Mammary epithelial cell (primary cell): ENCODE measurements at regions of chr15 and their contacts with region 1.

Region 1: GRCh38 chr15:101294731-101295606 is at the start of gene SNRPA1:
- DNase-seq: peak; percentile 95
- H3K4me3 ChIP-seq: peak within 1 kb of the TSS; percentile 81 to 97 (median 94)
- H3K27ac ChIP-seq: peak within 1 kb of the TSS; percentile 90
- H3K4me1 ChIP-seq: peaks cover 30% of the 10 kb centered on the region
- H3K27me3 ChIP-seq: no peaks in the 10 kb centered on the region
- CTCF ChIP-seq: no peak
- total RNA-seq, gene SNRPA1: 17.2 to 85.7 TPM

Region 2: DNA sequence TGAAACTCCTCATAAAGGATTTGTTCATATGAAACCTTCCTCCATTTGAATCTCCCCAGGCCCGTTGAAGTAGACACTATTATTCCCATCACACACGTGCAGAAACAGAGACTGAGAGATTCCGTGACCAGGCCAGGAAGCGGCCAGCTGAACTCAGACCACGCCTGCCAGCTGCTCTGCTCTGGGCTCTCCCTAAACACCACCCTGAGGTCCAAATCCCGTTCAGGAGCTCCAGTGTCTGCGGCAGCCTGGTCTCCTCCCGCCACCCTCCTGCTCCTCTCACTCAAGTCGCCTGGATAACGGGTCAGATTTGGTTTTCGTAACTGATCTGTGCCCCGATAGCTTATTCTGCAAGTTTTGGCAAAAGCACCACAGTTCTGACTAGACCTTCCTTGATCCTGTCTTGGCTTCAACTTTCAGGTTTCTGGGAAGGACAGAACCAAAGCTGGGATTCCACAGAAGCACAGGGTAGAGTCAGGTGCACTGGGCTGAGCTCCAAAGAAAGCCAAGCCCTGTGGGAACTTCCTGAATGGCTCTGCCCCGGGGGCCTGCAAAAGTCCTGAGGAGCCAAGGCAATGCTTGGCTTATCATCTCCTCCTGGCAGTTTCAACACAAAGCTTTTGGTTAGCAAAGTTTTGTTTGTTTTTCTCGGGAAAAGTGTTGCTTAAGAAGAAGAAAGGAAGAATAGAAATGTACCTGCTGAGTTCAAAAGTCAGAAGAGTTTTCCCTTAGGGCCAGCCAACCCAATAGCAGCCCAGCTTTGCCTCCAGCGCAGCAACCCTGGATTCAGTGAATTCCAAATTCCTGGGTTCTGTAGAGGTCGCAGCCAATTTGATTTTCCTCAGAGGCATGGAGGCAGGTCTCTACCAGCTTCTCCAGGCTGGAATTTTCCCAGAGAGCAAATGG is 53.9 kb after region 1 on chr15:
- CTCF ChIA-PET with region 1: no interaction called
- dilution Hi-C with region 1: loop called (anchors 5 kb)
- in situ Hi-C with region 1: no loop called
- intact Hi-C with region 1: no loop called
- DNase-seq: peak; percentile 80
- H3K4me3 ChIP-seq: no peak overlapping the region
- H3K27ac ChIP-seq: no peak overlapping the region
- H3K4me1 ChIP-seq: peaks cover 15% of the 10 kb centered on the region
- H3K27me3 ChIP-seq: peaks cover 2% of the 10 kb centered on the region
- CTCF ChIP-seq: no peak

Region 3: DNA sequence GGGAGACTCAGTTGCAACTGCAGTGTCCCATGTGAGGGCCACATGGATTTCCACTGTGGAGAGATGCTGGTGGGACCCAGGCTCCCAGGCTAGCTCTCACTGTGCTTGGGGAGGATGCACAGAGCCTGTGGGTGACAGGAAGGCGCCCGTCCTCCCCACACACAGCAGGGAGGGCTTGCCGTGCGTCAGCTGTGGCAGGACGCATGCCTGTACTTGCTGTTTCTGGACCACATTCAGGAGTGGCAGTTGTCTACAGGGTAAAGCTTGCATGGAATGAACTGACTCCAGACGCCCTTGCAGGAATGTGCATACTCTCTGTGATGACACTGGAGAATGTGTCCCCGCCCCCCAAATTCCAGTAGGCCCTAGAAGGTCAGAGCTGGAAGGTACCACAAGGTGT is 63.9 kb after region 1 on chr15:
- CTCF ChIA-PET with region 1: interaction called, 4 read pairs
- dilution Hi-C with region 1: no loop called
- in situ Hi-C with region 1: loop called in 1 of 2 experiments (anchors 10 kb)
- intact Hi-C with region 1: loop called (anchors 1 kb)
- DNase-seq: peak; percentile 94
- H3K4me3 ChIP-seq: no peak overlapping the region
- H3K27ac ChIP-seq: peak overlapping the region; percentile 58
- H3K4me1 ChIP-seq: peaks cover 50% of the 10 kb centered on the region
- H3K27me3 ChIP-seq: no peaks in the 10 kb centered on the region
- CTCF ChIP-seq: no peak

Region 4: GRCh38 chr15:101482526-101483371 is 187.8 kb after region 1 on chr15:
- CTCF ChIA-PET with region 1: no interaction called
- dilution Hi-C with region 1: no loop called
- in situ Hi-C with region 1: loop called (anchors 5 to 25 kb)
- intact Hi-C with region 1: no loop called
- DNase-seq: peak; percentile 52
- H3K4me3 ChIP-seq: no peak overlapping the region
- H3K27ac ChIP-seq: no peak overlapping the region
- H3K4me1 ChIP-seq: peaks cover 8% of the 10 kb centered on the region
- H3K27me3 ChIP-seq: peaks cover 2% of the 10 kb centered on the region
- CTCF ChIP-seq: no peak

Region 5: DNA sequence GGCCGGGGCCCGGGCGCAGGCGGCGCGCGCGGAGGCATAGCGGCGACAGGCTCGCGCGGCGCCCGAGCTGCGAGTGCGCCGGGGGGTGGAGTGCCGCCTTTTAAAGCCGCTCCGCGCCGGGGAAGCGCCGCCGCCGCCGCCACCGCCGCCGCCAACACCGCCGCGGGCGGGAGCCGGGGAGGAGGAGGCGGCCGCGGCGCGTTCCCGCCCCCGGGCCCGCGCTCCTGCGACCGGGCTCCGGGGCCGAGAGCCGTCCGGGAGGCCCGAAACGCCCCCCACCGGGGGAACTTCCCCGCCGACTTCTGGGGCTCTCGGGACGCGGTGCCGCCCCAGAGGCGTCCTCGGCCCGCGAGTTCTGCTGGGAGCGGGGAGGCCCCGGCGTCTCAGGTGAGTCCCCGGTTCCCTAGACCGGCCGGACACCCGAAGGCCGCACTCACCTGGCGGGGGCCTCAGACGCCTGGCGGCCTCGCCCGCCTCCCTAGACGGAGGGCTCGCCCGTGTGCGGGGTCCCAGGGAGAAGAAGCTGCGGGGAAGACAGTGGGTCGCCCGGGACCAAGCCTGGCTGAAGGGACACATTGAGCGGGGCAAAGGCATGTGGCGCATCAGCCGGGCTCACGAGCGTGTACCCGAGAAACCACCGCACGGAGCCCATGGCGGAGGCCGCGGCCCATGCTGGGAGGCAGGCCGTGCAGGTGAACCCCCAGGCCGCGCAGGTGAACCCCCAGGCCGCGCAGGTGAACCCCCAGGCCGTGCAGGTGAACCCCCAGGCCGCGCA is 194.9 kb after region 1 on chr15 and contains the start of gene PCSK6:
- CTCF ChIA-PET with region 1: no interaction called
- dilution Hi-C with region 1: no loop called
- in situ Hi-C with region 1: loop called in 1 of 2 experiments (anchors 25 kb)
- intact Hi-C with region 1: loop called (anchors 2 kb)
- DNase-seq: no peak
- H3K4me3 ChIP-seq: no peak within 1 kb of the TSS
- H3K27ac ChIP-seq: no peak within 1 kb of the TSS
- H3K4me1 ChIP-seq: no peaks in the 10 kb centered on the region
- H3K27me3 ChIP-seq: peaks cover 11% of the 10 kb centered on the region
- CTCF ChIP-seq: no peak
- total RNA-seq, gene PCSK6: 1.7 to 6.1 TPM

Region 6: GRCh38 chr15:101578437-101578894 is 283.5 kb after region 1 on chr15:
- CTCF ChIA-PET with region 1: no interaction called
- dilution Hi-C with region 1: no loop called
- in situ Hi-C with region 1: loop called in 1 of 2 experiments (anchors 10 kb)
- intact Hi-C with region 1: loop called (anchors 2 kb)
- DNase-seq: peak; percentile 28
- H3K4me3 ChIP-seq: no peak overlapping the region
- H3K27ac ChIP-seq: no peak overlapping the region
- H3K4me1 ChIP-seq: peaks cover 5% of the 10 kb centered on the region
- H3K27me3 ChIP-seq: no peaks in the 10 kb centered on the region
- CTCF ChIP-seq: peak; percentile 55 to 77

Region 7: GRCh38 chr15:101652098-101652782 is 357.3 kb after region 1 on chr15 and contains the start of gene TM2D3:
- CTCF ChIA-PET with region 1: no interaction called
- dilution Hi-C with region 1: loop called (anchors 5 kb)
- in situ Hi-C with region 1: loop called in 1 of 2 experiments (anchors 5 kb)
- intact Hi-C with region 1: no loop called
- DNase-seq: peak; percentile 92
- H3K4me3 ChIP-seq: peak within 1 kb of the TSS; percentile 88 to 99 (median 98)
- H3K27ac ChIP-seq: peak within 1 kb of the TSS; percentile 88
- H3K4me1 ChIP-seq: peaks cover 17% of the 10 kb centered on the region
- H3K27me3 ChIP-seq: no peaks in the 10 kb centered on the region
- CTCF ChIP-seq: peak; percentile 53 to 81
- total RNA-seq, gene TM2D3: 27.7 to 36.0 TPM